RWPE1 (cell line): ENCODE measurements at regions of chr6 and their contacts with region 1.

Region 1: DNA sequence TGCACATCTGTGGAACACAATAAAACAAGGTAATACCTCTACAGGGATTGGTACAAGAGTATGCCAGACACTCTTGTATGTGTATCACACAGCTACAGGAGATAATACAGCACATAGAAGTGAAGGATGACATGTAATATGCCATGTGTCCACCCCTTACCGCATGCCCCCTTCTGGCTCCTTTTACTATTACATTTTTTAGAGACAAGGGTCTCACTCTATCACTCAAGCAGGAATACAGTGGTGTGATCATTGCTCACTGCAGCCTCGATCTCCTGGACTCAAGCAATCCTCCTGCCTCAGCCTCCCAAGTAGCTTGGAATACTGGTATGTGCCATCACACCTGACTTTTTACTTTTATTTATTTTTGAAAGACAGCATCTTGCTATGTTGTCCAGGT is 4.2 kb upstream of the NCR3 start:
- DNase-seq: peak; percentile 34
- H3K27ac ChIP-seq: no peak overlapping the region
- CTCF ChIP-seq: peak; percentile 43

Region 2: GRCh38 chr6:31493875-31494694 is 102.9 kb before region 1 on chr6:
- CTCF ChIA-PET with region 1: interaction called, 11 read pairs
- POLR2A ChIA-PET with region 1: no interaction called
- DNase-seq: peak; percentile 51
- H3K27ac ChIP-seq: peak overlapping the region; percentile 69
- CTCF ChIP-seq: peak; percentile 90

Region 3: DNA sequence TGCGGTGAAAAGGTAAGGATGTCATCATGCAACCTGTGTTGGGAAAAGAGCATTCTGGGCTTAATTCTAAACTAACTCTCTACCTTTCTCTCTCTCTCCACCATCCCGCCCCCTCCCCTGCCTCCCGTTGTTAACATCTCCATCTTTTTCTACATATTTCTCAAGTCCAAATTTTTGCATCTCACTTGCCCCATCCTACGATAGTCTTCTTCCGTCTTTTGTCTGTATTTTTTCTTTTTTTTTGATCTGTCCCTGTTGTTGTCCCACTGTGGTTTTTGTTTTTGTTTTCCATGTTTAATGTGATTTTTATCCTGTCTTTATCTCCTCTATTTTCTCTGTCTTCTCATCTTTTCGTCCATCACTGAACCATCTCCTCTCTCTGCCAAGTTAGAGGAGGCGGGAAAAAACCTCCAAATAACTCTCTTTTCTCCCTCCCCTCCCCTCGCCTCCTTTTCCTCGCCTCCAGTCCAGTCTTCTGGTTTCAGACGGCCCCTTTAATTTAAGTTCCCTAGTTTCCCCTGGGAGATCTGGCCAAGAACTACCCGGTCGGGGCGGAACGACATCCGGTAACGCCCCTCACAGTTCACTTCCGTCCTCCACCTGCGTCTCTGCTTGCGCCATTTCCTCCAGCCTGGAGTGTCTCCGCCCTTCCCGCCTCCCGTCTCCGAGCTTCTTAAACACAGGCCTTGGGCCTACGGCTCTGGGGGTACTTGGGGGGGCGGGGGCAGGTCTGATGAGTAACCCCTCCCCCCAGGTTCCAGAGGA is 49.9 kb before region 1 on chr6 and contains the start of gene NFKBIL1:
- CTCF ChIA-PET with region 1: interaction called, 96 read pairs
- POLR2A ChIA-PET with region 1: interaction called, 10 read pairs
- DNase-seq: peak; percentile 92
- H3K27ac ChIP-seq: peak within 1 kb of the TSS; percentile 76
- CTCF ChIP-seq: peak; percentile 62

Region 4: DNA sequence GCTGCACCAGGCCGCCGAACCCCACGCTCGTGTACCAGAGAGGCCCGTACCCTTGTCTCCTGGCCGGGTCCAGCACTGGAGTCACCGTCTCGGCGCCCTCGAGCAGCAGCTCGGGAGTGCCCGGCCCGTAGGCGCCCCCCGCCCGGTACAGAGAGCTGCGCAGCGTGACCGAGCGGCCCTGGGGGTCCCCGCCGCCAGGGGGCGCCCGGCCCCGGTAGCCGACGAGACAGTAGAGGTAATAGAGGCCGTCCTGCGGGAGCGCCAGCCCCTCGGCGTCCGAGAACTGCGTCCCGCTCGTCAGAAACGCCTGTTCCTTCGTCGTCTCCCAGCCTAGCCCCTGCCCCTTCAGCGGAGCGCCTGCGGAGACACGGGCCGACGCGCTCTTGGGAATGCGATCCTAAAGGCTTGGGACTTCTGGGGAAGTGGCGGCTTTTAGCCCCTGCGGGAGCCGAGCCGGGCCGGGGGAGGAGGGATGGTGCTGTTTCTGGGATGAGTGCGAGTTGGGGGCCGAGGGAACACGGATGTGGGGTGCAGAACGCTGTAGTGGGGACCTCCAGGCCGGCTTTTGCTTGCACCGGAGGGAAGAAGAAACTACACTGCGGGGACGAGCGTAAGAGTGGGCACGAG is 16.1 kb before region 1 on chr6:
- CTCF ChIA-PET with region 1: interaction called, 33 read pairs
- POLR2A ChIA-PET with region 1: interaction called, 3 read pairs
- DNase-seq: peak; percentile 83
- H3K27ac ChIP-seq: peak overlapping the region; percentile 43
- CTCF ChIP-seq: peak; percentile 96